ENCODE measurements at regions of chr19 and their contacts with region 1.

Region 1: DNA sequence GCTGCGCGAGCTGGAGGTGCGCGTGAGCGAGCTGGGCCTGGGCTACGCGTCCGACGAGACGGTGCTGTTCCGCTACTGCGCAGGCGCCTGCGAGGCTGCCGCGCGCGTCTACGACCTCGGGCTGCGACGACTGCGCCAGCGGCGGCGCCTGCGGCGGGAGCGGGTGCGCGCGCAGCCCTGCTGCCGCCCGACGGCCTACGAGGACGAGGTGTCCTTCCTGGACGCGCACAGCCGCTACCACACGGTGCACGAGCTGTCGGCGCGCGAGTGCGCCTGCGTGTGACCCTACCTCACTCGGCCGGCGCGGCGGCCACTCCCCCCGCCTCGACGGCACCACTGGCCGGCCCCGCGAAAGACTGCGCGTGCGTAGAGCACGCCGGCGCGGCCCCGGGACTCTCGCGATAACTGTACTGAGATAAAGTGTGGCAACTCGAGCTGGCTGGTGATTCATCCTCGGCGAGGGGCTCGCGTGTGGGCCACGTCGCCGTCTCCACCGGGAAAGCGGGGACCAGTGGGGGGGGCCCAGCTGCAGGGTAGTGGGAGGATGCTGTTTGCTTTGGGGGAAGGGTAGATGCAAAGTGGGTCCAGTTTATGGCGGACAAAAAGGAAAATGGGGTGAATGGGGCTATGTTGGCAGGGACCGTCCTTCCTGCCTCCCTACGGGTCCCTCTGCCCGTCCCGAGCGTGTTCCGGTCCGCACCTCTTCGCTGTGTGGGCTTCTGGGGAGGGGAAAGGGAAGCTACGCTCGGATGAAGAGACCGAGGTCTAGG is 11.4 kb downstream of the FUT6 start:
- DNase-seq: peak; percentile 97 to 99 (median 99)
- ATAC-seq: peak; percentile 86
- H3K4me3 ChIP-seq: peak overlapping the region; percentile 59
- H3K27ac ChIP-seq: peak overlapping the region; percentile 96
- H3K4me1 ChIP-seq: peaks cover 6 to 69% of the 10 kb centered on the region in 2 experiments; a peak in 4 of 5 replicates
- H3K27me3 ChIP-seq: peaks cover 0 to 5% of the 10 kb centered on the region in 2 experiments; a peak in 3 of 5 replicates
- CTCF ChIP-seq: peak in 1 of 3 experiments; percentile 33; a peak in 2 of 6 replicates
- EP300 ChIP-seq: peak; percentile 30; the same call in 1 of the 2 replicates
- POLR2A ChIP-seq: peak; percentile 99
- RAD21 ChIP-seq: no peak

Region 2: GRCh38 chr19:5774921-5775320 is 53.2 kb before region 1 on chr19:
- CTCF ChIA-PET with region 1: interaction called, 16 read pairs
- POLR2A ChIA-PET with region 1: interaction called, 3 read pairs
- in situ Hi-C with region 1: no loop called
- intact Hi-C with region 1: no loop called
- DNase-seq: no peak
- ATAC-seq: no peak
- H3K4me3 ChIP-seq: no peak overlapping the region
- H3K27ac ChIP-seq: no peak overlapping the region
- H3K4me1 ChIP-seq: peaks cover 0 to 10% of the 10 kb centered on the region in 2 experiments; a peak in 4 of 5 replicates
- H3K27me3 ChIP-seq: peaks cover 2 to 11% of the 10 kb centered on the region in 2 experiments; a peak in 2 of 5 replicates
- CTCF ChIP-seq: no peak
- EP300 ChIP-seq: no peak
- POLR2A ChIP-seq: no peak
- RAD21 ChIP-seq: no peak

Region 3: GRCh38 chr19:5803752-5804515 is 24.1 kb before region 1 on chr19:
- CTCF ChIA-PET with region 1: interaction called, 20 read pairs
- POLR2A ChIA-PET with region 1: interaction called, 12 read pairs
- in situ Hi-C with region 1: no loop called
- intact Hi-C with region 1: loop called (anchors 2 kb)
- DNase-seq: peak; percentile 94 to 97 (median 96)
- ATAC-seq: peak; percentile 93
- H3K4me3 ChIP-seq: peak overlapping the region; percentile 30; the same call in 1 of the 2 replicates
- H3K27ac ChIP-seq: peak overlapping the region; percentile 5; the same call in 2 of the 3 replicates
- H3K4me1 ChIP-seq: peaks cover 34 to 76% of the 10 kb centered on the region in 2 experiments
- H3K27me3 ChIP-seq: no peaks in the 10 kb centered on the region
- CTCF ChIP-seq: peak; percentile 98 to 100 (median 99)
- EP300 ChIP-seq: no peak
- POLR2A ChIP-seq: no peak
- RAD21 ChIP-seq: peak; percentile 91 to 96

Region 4: DNA sequence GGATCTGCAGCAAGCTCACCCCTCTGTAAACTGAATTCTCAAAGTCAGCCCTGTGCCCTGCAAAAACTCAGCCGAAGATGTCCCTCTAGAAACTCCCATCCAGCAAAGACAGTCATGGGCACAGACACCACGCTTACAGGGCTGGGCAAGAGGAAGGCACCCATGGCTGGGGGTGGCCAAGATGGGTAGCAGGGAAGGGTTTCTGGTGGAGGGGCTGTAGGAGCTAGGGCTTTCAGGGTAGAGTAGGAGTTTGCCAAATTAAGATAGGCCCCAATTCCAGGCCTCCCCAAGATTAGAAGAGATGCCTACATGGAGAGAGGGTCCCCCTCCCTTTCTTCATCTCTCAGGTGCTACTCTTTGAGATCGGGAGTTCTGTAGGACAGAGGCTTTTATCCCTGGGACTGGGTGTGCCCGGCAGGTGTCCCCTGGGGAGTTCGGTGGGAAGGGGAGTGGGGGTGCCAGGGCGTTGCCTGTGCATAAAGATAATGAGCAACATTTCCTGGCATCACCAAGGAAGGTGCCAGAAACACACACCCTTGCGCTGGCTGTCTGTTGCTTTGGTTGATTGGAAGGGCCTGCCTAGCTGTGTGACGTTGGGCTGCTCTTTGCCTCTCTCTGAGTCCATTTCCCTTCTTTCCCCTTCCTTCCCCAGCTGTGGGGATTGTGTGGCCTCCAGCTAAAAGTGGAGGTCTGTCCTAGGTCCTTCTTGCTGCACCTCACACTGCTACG is 13.8 kb before region 1 on chr19:
- CTCF ChIA-PET with region 1: no interaction called
- POLR2A ChIA-PET with region 1: interaction called, 16 read pairs
- in situ Hi-C with region 1: no loop called
- intact Hi-C with region 1: no loop called
- DNase-seq: no peak
- ATAC-seq: no peak
- H3K4me3 ChIP-seq: no peak overlapping the region
- H3K27ac ChIP-seq: no peak overlapping the region
- H3K4me1 ChIP-seq: peaks cover 0 to 4% of the 10 kb centered on the region in 2 experiments; a peak in 2 of 5 replicates
- H3K27me3 ChIP-seq: no peaks in the 10 kb centered on the region
- CTCF ChIP-seq: no peak
- EP300 ChIP-seq: no peak
- POLR2A ChIP-seq: no peak
- RAD21 ChIP-seq: no peak

Region 5: DNA sequence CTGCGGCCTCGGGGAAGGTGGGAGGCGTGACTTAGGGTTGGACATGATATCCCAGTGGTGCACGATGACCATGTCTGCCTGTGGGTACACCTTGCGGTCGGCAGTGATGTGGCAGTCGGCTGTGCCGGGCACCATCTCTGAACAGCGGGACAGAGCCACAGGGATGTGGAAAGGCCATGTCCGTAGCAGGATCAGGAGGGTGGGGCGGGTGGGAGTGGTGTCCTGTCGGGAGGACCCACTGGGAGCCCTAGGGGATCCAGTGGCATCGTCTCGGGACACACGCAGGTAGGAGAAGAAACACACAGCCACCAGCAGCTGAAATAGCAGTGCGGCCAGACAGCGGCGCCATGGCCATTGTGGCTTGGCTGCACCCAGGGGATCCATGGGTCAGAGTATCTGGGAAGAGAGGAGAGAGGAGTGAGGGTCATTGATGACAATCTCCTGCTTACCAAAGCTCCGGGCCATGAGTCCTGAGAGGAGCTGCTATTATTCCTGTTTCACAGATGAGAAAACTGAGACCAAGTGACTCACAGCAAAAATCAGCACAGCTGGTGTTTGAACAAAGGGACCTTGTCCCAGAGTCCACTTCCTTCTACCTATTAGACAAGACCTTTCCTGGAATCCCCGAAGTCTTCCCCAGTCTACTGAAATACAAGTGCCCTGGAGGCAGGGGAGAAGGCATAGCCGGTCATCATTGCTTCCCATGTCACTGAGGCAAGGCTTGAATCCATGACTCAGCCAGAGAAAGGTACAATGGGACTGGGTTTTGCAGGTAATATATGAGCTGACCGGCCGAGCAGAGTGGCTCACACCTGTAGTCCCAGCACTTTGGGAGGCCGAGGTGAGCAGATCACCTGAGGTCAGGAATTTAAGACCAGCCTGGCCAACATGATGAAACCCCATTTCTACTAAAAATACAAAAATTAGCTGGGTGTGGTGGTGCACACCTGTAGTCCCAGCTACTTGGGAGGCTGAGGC is 16.7 kb after region 1 on chr19:
- CTCF ChIA-PET with region 1: no interaction called
- POLR2A ChIA-PET with region 1: interaction called, 13 read pairs
- in situ Hi-C with region 1: no loop called
- intact Hi-C with region 1: no loop called
- DNase-seq: no peak
- ATAC-seq: no peak
- H3K4me3 ChIP-seq: no peak overlapping the region
- H3K27ac ChIP-seq: no peak overlapping the region
- H3K4me1 ChIP-seq: peaks cover 0 to 6% of the 10 kb centered on the region in 2 experiments; a peak in 2 of 5 replicates
- H3K27me3 ChIP-seq: peaks cover 16 to 31% of the 10 kb centered on the region in 2 experiments
- CTCF ChIP-seq: no peak
- EP300 ChIP-seq: no peak
- POLR2A ChIP-seq: no peak
- RAD21 ChIP-seq: no peak

Region 6: DNA sequence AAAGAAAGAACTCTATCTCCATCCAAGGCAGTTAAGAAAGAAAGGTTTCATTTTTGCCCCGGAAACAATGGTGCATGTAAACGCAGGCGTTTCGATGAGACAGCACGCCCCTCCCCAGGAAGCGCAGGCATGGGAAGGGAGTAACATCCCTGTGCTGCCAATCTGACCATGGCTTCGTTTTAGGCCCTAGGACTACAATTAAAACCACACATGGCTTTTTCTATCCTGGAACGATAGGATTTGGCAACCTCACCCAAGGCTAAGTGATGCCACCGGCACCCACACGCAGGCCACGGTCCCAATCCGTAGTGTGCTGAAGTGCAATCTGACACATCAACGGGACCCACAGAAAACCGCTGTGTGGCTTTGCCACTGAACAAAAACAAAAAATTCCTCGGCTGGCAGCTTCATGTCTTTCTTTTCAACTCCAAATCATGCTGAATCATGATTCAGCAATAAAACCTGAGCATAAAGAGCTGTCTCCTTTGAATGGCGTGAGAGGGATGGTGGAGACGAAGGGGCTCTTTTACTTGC is 125.7 kb after region 1 on chr19:
- CTCF ChIA-PET with region 1: no interaction called
- POLR2A ChIA-PET with region 1: no interaction called
- in situ Hi-C with region 1: no loop called
- intact Hi-C with region 1: no loop called
- DNase-seq: peak; percentile 41 to 60 (median 46)
- ATAC-seq: peak; percentile 65
- H3K4me3 ChIP-seq: peak overlapping the region; percentile 1; the same call in 1 of the 2 replicates
- H3K27ac ChIP-seq: peak overlapping the region; percentile 70
- H3K4me1 ChIP-seq: peaks cover 43 to 46% of the 10 kb centered on the region in 2 experiments
- H3K27me3 ChIP-seq: no peaks in the 10 kb centered on the region
- CTCF ChIP-seq: no peak
- EP300 ChIP-seq: no peak
- POLR2A ChIP-seq: no peak
- RAD21 ChIP-seq: no peak

Region 7: DNA sequence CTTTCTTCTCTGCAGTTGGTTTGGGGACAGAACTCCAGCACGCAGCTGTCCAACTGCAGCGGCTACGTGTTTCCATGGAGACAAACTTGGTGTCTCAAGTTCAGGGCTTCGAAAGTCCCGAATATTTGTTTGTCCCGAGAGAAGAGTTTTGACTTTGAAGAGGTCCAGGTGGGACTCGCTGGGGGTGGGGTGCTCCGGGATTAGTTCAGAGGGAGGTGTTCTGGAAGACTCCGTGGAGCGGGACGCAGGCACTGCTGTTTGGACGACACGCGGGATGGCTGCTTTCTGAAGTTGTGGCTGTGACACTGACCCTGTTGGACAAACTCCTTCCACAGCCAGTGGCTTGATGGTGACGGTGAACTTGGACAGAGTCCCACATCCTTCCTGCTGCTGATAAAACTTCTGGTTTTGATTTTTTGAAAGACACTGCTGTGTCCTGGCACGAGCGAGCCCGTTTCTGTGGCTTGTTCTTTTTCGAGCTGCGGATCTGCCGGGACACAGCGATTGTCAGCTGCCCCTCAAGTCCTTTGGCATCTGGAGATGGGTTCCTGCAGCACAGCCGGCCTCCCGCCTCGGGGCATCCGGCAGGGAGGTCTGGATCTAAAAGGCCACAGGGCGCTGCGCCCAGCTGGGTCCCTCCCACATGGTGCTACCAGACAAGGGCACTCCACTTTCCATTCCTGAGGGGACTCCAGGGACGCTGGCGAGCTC is 165.7 kb after region 1 on chr19:
- CTCF ChIA-PET with region 1: no interaction called
- POLR2A ChIA-PET with region 1: no interaction called
- in situ Hi-C with region 1: no loop called
- intact Hi-C with region 1: no loop called
- DNase-seq: no peak
- ATAC-seq: no peak
- H3K4me3 ChIP-seq: no peak overlapping the region
- H3K27ac ChIP-seq: no peak overlapping the region
- H3K4me1 ChIP-seq: peaks cover 7 to 40% of the 10 kb centered on the region in 2 experiments; a peak in 3 of 5 replicates
- H3K27me3 ChIP-seq: no peaks in the 10 kb centered on the region
- CTCF ChIP-seq: no peak
- EP300 ChIP-seq: no peak
- POLR2A ChIP-seq: no peak
- RAD21 ChIP-seq: no peak

Measured in K562 (cell line).